AG04449 (cell line): ENCODE measurements at regions of chr4 and their contacts with region 1.

Region 1: DNA sequence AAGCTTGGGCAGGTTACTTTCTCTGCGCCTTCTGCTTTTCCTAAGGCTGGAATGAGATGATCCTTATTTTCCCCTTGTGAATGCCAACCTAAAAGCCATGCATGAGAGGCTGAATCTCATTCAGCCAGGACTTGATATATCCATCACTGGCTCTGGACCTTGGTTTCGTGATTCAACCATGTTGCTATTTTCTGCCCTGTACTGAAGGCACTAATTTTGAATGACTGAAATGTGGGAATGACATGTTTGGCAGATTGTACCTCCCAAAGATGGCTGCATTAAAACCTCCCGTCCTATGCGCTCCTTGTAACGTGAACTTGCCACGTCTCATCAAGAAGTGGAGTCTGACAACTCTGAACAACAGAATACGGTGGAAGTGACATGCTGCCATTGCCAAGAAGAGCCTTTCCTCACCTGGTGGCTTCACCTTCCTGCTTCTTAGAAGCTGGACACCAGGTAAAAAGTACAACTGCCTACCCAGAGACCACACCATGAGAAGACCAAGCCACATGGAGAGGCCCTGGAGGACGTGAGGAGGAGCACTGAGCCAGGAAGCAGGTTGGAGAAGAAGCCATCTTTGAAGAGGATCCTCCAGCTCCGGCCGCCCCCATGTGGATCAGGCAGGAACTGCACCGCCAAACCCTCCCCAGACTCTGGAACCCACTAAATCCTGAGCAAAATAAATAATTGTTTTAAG is 174.5 kb downstream of the NSUN7 start:
- DNase-seq: no peak
- H3K4me3 ChIP-seq: no peak overlapping the region
- CTCF ChIP-seq: peak; percentile 96

Region 2: GRCh38 chr4:40247350-40247749 is 676.9 kb before region 1 on chr4:
- CTCF ChIA-PET with region 1: no interaction called
- POLR2A ChIA-PET with region 1: no interaction called
- DNase-seq: no peak
- H3K4me3 ChIP-seq: no peak overlapping the region
- CTCF ChIP-seq: no peak

Region 3: DNA sequence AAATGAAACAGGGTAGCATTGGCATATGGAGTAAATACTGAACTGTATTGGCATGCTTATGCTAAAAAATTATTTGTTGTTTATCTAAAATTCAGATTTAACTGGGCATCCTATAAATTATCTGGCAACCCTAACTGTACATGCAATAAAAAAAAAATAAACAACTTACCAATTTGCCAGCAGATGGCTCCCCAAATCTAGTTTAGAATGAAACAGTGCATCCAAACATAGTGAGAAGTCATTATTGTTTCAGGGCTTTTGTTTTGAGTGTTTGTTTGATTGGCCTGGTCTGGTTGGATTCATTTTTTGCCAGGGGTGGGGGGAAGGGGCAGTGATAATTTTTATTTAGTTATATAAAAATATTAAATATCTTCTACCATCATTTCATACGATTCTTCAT is 187.3 kb before region 1 on chr4:
- CTCF ChIA-PET with region 1: interaction called, 41 read pairs
- POLR2A ChIA-PET with region 1: no interaction called
- DNase-seq: no peak
- H3K4me3 ChIP-seq: no peak overlapping the region
- CTCF ChIP-seq: peak; percentile 11

Region 4: GRCh38 chr4:40908702-40909362 is 15.4 kb before region 1 on chr4:
- CTCF ChIA-PET with region 1: interaction called, 457 read pairs
- POLR2A ChIA-PET with region 1: no interaction called
- DNase-seq: peak; percentile 7
- H3K4me3 ChIP-seq: no peak overlapping the region
- CTCF ChIP-seq: peak; percentile 87

Region 5: DNA sequence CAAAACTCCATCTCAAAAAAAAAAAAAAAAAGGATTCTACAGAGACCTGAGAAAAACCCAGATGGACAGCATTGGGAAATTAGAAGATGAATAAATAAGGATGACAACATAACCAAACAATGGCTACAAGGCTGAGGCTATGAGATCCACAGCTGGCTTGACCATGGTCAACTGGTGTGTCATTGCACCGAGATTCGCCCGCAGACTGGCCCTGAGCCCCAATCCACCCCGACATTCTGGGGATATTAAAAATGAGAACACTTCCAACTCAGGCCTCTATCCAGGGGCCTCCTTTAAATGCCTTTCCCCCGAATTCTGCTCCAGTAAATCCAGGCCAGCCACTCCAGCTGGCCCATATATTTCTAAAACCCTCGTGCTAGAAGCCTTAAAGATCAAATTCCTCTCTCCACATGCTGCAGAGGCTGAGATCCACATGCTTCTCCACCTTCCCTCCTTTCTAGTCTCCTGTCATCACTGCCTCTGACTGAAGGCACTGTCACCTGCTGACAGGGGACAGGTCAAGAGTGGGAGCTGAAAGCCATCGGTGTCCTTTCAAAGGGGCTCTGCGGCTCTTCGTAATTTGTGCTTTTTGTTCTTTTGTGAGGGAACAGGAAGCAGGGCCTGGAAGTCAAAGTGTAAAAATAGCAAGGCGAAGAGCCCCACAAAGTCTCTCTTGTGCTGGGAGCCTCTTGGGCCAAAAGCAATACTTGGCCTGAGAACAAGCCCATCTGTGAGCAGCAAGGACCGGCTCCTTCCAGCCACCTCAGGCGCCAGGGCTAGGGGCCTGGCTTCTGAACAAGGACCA is 29.2 kb after region 1 on chr4:
- CTCF ChIA-PET with region 1: interaction called, 48 read pairs
- POLR2A ChIA-PET with region 1: no interaction called
- DNase-seq: no peak
- H3K4me3 ChIP-seq: no peak overlapping the region
- CTCF ChIP-seq: no peak

Region 6: GRCh38 chr4:41024556-41025491 is 100.6 kb after region 1 on chr4:
- CTCF ChIA-PET with region 1: no interaction called
- POLR2A ChIA-PET with region 1: no interaction called
- DNase-seq: no peak
- H3K4me3 ChIP-seq: no peak overlapping the region
- CTCF ChIP-seq: no peak

Region 7: GRCh38 chr4:41143311-41144039 is 219.2 kb after region 1 on chr4:
- CTCF ChIA-PET with region 1: interaction called, 13 read pairs
- POLR2A ChIA-PET with region 1: no interaction called
- DNase-seq: peak; percentile 85
- H3K4me3 ChIP-seq: peak overlapping the region; percentile 9
- CTCF ChIP-seq: no peak

Region 8: GRCh38 chr4:41214136-41214824 is 290.0 kb after region 1 on chr4 and contains the start of gene APBB2:
- CTCF ChIA-PET with region 1: interaction called, 336 read pairs
- POLR2A ChIA-PET with region 1: no interaction called
- DNase-seq: peak; percentile 74
- H3K4me3 ChIP-seq: peak within 1 kb of the TSS; percentile 86
- CTCF ChIP-seq: peak; percentile 88

Region 9: GRCh38 chr4:41257257-41257901 is 333.1 kb after region 1 on chr4:
- CTCF ChIA-PET with region 1: interaction called, 46 read pairs
- POLR2A ChIA-PET with region 1: interaction called, 4 read pairs
- DNase-seq: no peak
- H3K4me3 ChIP-seq: peak overlapping the region; percentile 74
- CTCF ChIP-seq: no peak